Activated B cell treated with CpG ODN at 0.5 μM for 24 hours (primary cell): ENCODE measurements at regions of chr16 and their contacts with region 1.

Region 1: GRCh38 chr16:85615852-85616606 is 2.9 kb downstream of the GSE1 start:
- DNase-seq: peak; percentile 75
- ATAC-seq: peak; percentile 60
- H3K4me3 Mint-ChIP-seq: peak overlapping the region; percentile 76
- H3K27ac Mint-ChIP-seq: peak overlapping the region; percentile 72
- H3K4me1 Mint-ChIP-seq: peaks cover 47% of the 10 kb centered on the region
- H3K27me3 Mint-ChIP-seq: no peaks in the 10 kb centered on the region
- CTCF ChIP-seq: no peak

Region 2: GRCh38 chr16:85393674-85394483 is 222.2 kb before region 1 on chr16:
- CTCF ChIA-PET with region 1: interaction called, 4 read pairs
- POLR2A ChIA-PET with region 1: interaction called, 3 read pairs
- intact Hi-C with region 1: loop called (anchors 1 kb)
- DNase-seq: peak; percentile 65
- ATAC-seq: peak; percentile 83
- H3K4me3 Mint-ChIP-seq: no peak overlapping the region
- H3K27ac Mint-ChIP-seq: no peak overlapping the region
- H3K4me1 Mint-ChIP-seq: no peaks in the 10 kb centered on the region
- H3K27me3 Mint-ChIP-seq: peaks cover 16% of the 10 kb centered on the region
- CTCF ChIP-seq: no peak

Region 3: DNA sequence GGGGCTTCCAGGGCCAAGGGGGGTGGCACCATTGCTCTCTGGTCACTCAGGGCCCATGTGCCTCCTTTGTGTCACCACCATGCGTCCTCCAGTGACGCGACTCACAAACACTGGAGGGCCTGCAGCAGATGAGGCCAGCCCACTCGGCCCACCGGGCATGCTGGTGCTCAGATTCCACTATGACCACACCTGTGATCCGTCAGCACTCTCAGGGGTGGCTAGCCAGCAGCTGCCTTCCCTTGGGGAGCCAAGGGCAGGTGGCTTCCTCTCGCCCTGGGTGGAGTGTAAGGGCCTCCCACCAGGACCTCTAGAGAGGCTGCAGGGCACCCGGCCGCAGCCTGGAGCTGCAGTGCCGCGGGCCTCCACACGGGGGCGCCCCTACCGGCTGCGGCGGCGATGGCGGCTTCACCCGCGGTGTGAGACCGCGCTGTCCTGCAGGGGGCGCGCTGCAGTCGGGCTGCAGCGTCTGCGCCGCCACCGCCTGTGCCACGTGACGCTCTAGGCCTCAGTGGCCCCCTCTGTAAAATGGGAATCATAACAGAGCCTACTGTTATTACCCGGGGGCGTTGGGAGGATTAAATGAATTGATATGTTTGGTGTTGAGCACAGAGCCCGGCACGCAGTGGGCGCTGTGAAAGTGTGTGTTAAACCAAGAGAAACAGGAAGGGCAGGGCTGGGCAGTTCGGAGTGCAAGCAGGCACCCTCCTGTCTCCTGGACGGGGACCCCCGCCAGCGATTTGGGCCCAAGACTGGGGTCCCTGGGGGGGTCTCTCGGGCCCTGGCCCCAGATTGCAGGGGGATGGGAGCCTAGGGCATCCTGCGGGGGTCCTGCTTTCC is 195.3 kb before region 1 on chr16:
- CTCF ChIA-PET with region 1: interaction called, 51 read pairs
- POLR2A ChIA-PET with region 1: interaction called, 4 read pairs
- intact Hi-C with region 1: loop called (anchors 1 kb)
- DNase-seq: peak; percentile 80
- ATAC-seq: peak; percentile 78
- H3K4me3 Mint-ChIP-seq: no peak overlapping the region
- H3K27ac Mint-ChIP-seq: no peak overlapping the region
- H3K4me1 Mint-ChIP-seq: no peaks in the 10 kb centered on the region
- H3K27me3 Mint-ChIP-seq: peaks cover 14% of the 10 kb centered on the region
- CTCF ChIP-seq: peak; percentile 99

Region 4: DNA sequence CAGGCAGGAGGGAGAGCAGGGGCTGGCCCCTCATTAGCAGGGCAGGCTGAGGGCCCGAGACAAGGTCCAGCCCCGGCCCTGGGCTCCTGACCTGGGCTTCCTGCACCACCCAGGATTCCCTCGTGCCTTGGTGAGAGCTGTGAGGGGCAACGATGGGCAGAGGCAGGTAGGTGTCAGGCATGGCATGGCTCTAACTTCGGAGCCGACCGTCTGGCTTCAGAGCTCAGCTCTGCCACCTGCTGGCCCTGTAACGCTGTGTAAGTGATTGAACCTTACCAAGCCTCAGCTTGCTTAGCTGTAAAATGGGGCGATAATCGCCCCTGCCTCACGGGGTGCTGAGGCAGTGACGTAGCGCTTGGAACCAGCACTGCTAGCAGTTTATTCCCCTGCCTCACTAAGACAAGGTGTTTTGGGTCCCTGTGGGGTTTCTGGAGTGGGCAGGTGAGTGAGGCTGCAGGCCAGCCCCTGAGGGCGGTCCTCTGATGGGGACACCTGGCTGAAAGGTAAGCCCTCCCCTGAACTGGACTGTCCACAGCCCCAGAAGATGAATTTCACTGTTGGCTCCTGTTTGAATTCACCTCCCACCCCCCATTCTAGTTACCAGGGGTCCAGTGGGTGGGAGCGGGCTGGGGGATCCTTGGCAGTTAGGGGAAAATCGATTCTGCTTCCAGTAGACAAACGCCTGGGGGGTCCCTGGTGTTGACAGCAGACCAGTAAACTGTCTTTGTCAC is 187.7 kb before region 1 on chr16:
- CTCF ChIA-PET with region 1: interaction called, 12 read pairs
- POLR2A ChIA-PET with region 1: interaction called, 3 read pairs
- intact Hi-C with region 1: no loop called
- DNase-seq: peak; percentile 40
- ATAC-seq: peak; percentile 76
- H3K4me3 Mint-ChIP-seq: no peak overlapping the region
- H3K27ac Mint-ChIP-seq: no peak overlapping the region
- H3K4me1 Mint-ChIP-seq: no peaks in the 10 kb centered on the region
- H3K27me3 Mint-ChIP-seq: peaks cover 20% of the 10 kb centered on the region
- CTCF ChIP-seq: no peak

Region 5: DNA sequence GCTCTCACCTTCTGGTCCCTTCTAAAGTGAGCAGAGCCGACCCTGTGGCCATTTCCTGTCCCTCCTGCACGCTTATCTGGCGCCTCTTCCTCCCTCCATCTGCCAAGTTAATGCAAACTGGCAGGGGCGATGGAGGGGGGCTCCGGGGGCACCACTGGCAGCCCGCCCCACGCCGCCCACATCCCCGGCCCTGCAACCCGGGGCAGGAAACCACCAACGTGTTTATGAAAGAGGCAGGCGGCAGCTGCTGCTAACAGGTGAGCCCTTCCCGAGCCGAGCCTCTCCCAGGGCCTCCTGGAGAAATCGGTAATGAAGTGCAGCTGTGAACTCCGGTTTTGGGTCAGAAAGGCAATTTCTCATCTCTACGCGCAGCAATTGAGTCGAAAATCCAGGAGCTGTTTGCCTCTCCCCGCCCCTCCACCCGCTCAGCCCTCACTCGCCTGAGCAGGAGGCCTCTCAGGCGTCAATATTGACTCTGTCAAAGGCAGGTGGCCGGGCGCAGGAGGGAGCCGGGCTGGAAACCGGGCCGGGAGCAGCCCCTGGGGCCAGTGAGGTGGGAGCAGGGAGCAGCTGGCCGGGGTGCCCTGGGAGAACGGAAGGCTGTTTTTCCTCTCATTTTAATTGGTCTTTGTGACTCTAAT is 167.4 kb before region 1 on chr16:
- CTCF ChIA-PET with region 1: interaction called, 16 read pairs
- POLR2A ChIA-PET with region 1: interaction called, 5 read pairs
- intact Hi-C with region 1: no loop called
- DNase-seq: peak; percentile 27
- ATAC-seq: no peak
- H3K4me3 Mint-ChIP-seq: peak overlapping the region; percentile 48
- H3K27ac Mint-ChIP-seq: no peak overlapping the region
- H3K4me1 Mint-ChIP-seq: peaks cover 25% of the 10 kb centered on the region
- H3K27me3 Mint-ChIP-seq: peaks cover 11% of the 10 kb centered on the region
- CTCF ChIP-seq: no peak

Region 6: GRCh38 chr16:85479972-85480751 is 135.9 kb before region 1 on chr16:
- CTCF ChIA-PET with region 1: interaction called, 22 read pairs
- POLR2A ChIA-PET with region 1: no interaction called
- intact Hi-C with region 1: no loop called
- DNase-seq: peak; percentile 49
- ATAC-seq: peak; percentile 68
- H3K4me3 Mint-ChIP-seq: no peak overlapping the region
- H3K27ac Mint-ChIP-seq: no peak overlapping the region
- H3K4me1 Mint-ChIP-seq: peaks cover 15% of the 10 kb centered on the region
- H3K27me3 Mint-ChIP-seq: peaks cover 15% of the 10 kb centered on the region
- CTCF ChIP-seq: no peak

Region 7: GRCh38 chr16:85491058-85491771 is 124.8 kb before region 1 on chr16:
- CTCF ChIA-PET with region 1: interaction called, 16 read pairs
- POLR2A ChIA-PET with region 1: no interaction called
- intact Hi-C with region 1: no loop called
- DNase-seq: peak; percentile 37
- ATAC-seq: peak; percentile 62
- H3K4me3 Mint-ChIP-seq: no peak overlapping the region
- H3K27ac Mint-ChIP-seq: no peak overlapping the region
- H3K4me1 Mint-ChIP-seq: no peaks in the 10 kb centered on the region
- H3K27me3 Mint-ChIP-seq: peaks cover 13% of the 10 kb centered on the region
- CTCF ChIP-seq: no peak